ENCODE measurements at regions of chr16 and their contacts with region 1.

Region 1: GRCh38 chr16:25126820-25127232 is 15.3 kb downstream of the LCMT1 start:
- DNase-seq: peak in 40 of 42 donors; percentile 16 to 87 (median 64)

Region 2: DNA sequence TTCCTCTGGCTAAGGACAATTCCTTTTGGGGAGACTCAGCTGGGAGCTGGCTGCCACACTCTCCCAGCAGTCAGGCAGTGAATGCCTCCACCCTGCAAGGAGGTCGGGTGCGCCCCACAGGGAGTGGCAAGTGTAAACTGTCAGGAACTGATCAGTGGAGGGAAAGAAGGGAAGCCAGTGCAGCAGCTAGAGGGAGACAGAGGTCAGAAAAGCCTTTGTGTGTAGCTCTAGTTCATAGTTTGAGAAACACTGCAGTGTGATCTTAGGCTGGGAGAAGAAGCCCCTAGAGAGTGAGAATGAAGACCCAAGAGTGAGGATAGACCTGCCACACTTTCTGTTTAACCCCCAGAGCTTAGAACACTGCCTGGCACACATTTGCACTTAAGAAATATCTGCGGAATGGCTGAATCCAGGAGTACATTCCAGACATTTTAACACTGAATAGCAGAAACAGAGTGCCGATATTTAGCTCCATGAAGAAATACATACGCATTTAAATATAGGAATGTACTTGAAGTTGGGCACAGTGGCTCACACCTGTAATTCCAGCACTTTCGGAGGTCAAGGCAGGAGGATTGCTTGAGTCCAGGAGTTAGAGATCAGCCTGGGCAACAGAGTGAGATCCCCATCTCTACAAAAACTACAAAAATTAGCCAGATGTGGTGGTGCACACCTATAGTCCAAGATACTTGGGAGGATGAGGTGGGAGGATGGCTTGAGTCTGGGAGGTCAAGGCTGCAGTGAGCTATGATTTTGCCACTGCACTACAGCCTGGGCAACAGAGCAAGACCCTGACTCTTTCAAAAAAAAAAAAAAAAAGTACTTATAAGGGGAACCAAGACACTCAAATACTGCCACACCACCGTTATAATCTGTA is 292.1 kb before region 1 on chr16:
- intact Hi-C with region 1: no loop called
- DNase-seq: peak in 37 of 42 donors; percentile 24 to 82 (median 64)

Region 3: GRCh38 chr16:25051406-25052150 is 75.2 kb before region 1 on chr16:
- intact Hi-C with region 1: loop called (anchors 2 kb)
- DNase-seq: peak in 7 of 42 donors; percentile 15 to 34 (median 29)